ENCODE measurements at regions of chr14 and their contacts with region 1.

Region 1: DNA sequence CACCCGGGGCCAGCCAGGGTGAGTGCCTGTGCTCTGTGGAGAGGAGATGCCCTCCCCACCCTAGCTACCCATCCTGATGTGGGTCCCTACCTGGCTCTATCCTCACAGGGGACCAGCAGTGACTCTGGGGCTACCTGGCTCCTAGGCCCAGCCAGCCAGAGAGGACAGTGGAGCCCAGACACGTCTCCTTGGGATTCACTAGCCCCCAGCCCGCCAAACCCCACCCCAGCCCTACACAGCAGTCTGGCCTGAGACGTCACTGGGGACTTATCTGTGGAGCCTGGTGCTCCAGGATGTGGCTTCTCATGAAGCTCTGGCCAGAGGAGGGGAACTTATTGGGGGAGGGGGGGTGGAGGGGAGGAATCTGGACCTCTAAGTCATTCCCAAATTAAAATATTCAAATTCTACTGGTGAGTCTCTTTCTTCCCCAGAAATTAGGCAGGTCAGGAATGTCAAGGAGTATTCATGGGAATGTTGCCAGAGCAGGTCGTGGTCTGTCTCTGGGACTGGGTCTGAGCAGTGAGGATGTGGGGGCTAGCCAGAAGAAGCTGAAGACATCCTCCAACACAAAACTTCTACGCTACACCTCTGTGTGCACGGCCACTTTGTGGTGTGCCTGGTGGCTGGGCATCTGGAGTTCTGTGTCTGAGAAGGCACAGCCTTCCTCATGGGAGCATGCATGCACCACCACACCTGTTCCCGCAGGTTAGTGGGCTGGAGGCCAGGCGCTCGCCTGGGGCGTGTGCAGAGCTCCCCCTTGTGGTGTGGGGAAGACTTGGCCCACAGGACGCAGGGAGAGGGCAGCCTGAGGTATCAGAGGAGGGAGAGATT is 2.7 kb downstream of the CMTM5 start:
- DNase-seq: peak in 2 of 3 donors; percentile 74 to 81
- ATAC-seq: peak; percentile 91
- H3K4me3 ChIP-seq: no peak overlapping the region
- H3K4me1 ChIP-seq: no peaks in the 10 kb centered on the region
- CTCF ChIP-seq: peak; percentile 80

Region 2: GRCh38 chr14:23301288-23301968 is 78.2 kb before region 1 on chr14:
- intact Hi-C with region 1: no loop called
- DNase-seq: peak; percentile 97 to 99 (median 99)
- ATAC-seq: peak; percentile 87
- H3K4me3 ChIP-seq: peak overlapping the region; percentile 31
- H3K4me1 ChIP-seq: peaks cover 32% of the 10 kb centered on the region
- CTCF ChIP-seq: peak; percentile 79

Region 3: DNA sequence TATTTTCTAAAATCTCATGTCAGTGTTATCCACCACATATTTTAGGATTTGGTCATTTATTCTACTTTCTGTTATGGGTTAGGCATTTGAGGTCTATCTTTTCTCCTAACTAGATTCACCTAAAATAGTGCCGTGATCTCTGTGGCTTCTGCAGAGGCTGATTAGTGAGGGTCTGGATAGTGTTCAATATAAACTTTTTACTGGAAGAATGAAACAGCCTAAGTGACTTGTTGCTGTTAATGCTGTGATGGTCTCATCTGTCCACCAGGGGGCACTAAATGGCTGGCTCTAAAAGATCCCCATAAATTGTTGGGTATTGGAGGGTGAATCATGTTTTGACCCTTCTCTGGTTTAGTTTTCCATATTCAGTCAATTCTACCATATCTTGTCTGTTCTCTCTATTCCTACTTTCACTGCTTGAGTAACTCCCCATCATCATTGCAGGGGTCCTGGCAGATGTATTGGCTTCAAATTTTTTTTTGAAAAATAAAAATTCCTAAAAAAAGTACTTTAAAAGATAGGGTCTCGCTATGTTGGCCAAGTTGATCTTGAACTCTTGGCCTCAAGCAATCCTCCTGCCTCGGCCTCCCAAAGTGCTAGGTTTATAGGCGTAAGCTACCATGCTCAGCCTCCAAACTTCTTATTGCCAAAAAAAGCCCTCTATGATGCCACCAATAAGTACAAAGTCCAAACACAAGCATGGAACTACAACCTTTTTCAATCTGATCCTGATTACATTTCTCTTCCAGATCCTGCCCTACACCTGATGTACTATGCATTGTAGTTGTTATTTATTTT is 51.4 kb before region 1 on chr14:
- intact Hi-C with region 1: loop called in 1 of 2 experiments (anchors 5 kb)
- DNase-seq: peak in 1 of 3 donors; percentile 80
- ATAC-seq: peak; percentile 89
- H3K4me3 ChIP-seq: no peak overlapping the region
- H3K4me1 ChIP-seq: peaks cover 4% of the 10 kb centered on the region
- CTCF ChIP-seq: peak; percentile 61

Measured in mucosa of descending colon (tissue), 3 donors.